RWPE1 (cell line): ENCODE measurements at regions of chr20 and their contacts with region 1.

Region 1: DNA sequence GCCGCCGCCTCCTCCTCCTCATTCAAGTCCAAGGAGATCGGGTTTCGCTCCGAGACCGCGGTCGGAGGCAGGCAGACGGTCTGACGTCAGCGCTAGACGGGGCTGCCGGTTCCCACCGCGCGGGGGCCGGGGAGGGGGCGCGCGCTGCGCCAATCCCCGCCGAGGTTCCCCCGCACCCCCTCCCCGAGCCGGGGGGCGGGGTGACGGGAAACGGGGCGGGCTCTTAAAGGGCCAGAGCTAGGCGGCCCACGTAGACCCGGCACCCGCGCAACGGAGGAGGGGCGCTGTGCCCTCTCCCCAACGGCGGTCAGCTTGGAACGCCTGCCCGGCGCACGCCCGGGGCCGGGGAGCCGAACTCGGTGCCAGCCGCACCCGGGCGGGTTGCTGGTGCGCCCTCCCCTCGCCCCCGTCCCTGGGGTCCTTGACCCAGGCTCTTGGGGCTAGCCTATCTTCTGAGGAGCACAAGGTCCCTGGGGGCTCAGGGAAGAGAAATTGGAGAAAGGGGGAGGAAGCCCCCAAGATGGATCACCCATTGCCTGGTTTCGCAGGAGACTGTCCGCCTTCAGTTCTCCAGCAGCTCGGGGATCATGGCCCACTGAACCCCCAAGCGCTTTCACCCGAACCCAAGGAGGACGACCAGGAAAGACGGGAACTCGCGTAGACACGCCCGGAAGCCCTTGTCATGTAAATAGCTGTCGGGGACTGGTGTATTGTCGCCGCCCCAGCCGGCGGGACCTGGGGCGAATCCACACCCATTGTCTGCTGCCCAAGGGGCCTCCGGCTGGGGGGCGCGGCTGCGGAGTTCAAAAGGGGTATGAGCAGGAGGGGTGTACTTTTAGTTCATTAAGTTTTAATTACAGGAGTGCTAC is at the start of gene PMEPA1:
- DNase-seq: peak; percentile 99
- H3K27ac ChIP-seq: peak within 1 kb of the TSS; percentile 96
- CTCF ChIP-seq: no peak

Region 2: DNA sequence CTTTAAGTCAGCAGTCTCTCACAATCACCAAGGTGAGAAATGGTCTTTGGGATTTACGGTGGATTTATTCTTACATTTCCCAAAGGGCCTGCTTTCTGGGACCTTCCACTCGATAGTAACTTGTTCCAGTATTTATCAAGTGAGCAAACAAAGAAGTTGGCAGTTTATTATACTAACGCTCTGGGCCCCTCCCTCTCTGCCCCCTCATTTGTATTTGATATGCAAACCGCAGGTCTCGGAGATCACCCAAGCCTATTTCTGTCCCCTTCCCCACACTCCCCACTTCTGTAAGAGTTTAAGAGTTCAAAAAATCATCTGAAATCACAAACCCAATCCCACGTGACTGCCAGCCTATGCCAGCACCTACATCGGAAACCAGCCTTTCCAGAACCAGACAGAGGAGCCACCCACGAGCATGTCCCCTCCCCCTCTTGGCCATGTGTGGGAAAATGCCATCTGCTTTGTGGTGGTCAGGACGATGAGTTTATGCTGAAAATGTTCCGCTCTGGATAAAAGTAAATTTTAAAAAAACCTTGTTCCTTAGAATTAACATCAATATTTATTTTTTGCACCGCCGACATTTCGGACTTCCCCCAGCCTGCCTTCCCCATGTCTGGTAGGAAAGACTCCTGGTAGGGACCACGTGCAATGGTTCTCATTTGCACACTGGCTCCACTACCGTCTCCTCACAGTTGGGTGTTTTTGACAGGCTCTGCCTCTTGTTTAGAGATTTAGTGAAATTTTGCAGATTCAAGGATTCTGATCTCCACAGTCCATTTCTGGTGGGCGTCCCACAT is 800.0 kb before region 1 on chr20:
- CTCF ChIA-PET with region 1: no interaction called
- POLR2A ChIA-PET with region 1: no interaction called
- DNase-seq: no peak
- H3K27ac ChIP-seq: no peak overlapping the region
- CTCF ChIP-seq: no peak

Region 3: DNA sequence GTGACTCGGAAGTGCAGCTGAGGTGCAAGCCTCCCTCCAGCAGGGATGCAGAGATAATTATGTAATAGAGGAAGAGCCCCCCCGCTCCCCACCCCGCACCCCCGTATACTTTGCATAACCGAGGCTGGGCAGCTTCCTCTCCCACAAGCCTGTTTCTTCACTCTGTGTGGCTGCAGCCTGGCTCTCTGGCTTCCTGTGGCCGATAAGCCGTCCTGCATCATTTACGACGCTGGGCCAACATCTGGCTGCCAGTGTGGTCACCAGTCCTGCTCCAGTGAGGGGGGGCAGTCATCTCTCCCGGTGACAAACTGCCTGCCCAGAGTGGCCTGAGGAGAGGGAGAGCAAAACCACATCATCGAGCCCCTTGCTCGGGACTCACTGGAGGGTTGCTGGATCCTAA is 259.7 kb before region 1 on chr20:
- CTCF ChIA-PET with region 1: no interaction called
- POLR2A ChIA-PET with region 1: no interaction called
- DNase-seq: no peak
- H3K27ac ChIP-seq: no peak overlapping the region
- CTCF ChIP-seq: no peak

Region 4: DNA sequence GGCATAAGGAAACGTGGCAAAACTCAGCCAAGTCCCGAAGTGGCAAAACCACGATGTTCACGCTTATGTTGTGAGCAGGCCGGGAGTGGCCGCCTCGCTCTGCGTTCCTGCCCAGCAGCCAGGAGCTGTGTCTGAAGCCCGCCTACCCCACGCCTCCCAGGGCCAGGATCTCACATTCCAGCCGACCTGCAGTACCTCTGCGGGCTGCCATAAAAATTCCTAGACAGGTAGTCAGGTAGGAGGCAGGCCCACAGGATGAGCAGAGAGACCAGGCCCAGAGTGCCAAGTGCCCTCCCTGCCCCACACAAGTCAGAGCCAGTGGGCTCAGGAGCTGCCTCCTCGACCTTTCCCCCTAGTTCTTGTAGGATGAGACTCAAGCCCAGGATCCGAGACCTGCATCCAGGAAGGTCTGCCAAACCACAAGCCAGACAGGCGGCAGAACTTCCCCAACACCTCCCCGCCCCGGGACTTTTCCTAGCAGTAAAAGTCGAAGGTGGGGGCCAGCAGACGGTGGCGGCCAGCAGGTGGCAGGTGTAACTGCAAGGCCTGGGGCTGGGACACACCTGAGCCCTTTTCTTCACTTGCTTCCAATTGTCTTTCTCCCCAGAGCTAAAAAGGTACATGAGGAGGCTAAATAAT is 17.0 kb before region 1 on chr20:
- CTCF ChIA-PET with region 1: interaction called, 14 read pairs
- POLR2A ChIA-PET with region 1: interaction called, 18 read pairs
- DNase-seq: peak; percentile 97
- H3K27ac ChIP-seq: peak overlapping the region; percentile 96
- CTCF ChIP-seq: no peak; the same call in 1 of the 2 replicates

Region 5: DNA sequence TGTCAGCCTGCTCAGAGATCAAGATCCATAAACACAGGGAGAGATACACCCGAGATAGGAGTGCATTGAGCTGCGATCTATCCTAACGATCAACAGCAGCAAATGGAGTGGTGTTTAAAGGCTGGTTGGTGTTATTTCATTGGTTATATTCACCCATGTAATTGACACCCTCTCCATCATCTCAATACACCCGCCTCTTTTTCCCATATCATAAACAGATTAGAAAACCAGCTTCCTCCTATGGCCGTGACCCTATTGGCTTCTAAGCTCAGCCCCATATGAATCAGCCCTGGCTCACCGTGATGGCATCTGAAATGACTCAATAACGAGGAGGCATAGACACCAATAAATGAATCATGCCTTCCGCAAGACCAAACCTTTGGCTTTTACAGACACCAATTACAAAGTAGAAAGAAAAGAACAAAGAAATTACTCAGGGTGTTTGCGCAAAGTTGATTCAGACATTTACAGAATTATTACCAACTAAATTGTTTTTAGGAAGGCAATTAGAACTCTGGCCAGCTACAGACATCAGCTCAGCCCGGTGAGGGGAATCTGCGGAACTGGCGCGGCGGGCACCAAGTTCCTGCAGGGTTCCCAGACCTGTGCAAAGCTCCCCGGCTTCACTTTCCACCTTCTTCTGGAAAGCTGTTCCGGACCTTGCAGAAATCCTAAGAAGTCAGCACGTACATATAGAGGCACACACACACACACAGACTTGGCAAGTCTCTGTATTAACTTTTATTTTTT is 11.9 kb before region 1 on chr20:
- CTCF ChIA-PET with region 1: interaction called, 14 read pairs
- POLR2A ChIA-PET with region 1: interaction called, 18 read pairs
- DNase-seq: peak; percentile 100
- H3K27ac ChIP-seq: peak overlapping the region; percentile 96
- CTCF ChIP-seq: no peak